ENCODE measurements at regions of chr18 and their contacts with region 1.

Region 1: GRCh38 chr18:21803495-21803894 is 62.9 kb downstream of the MIB1 start:
- DNase-seq: no peak
- ATAC-seq: no peak
- H3K4me3 ChIP-seq: no peak overlapping the region
- H3K27ac ChIP-seq: no peak overlapping the region
- H3K4me1 ChIP-seq: peaks cover 0 to 5% of the 10 kb centered on the region in 2 donors
- H3K27me3 ChIP-seq: no peaks in the 10 kb centered on the region

Region 2: DNA sequence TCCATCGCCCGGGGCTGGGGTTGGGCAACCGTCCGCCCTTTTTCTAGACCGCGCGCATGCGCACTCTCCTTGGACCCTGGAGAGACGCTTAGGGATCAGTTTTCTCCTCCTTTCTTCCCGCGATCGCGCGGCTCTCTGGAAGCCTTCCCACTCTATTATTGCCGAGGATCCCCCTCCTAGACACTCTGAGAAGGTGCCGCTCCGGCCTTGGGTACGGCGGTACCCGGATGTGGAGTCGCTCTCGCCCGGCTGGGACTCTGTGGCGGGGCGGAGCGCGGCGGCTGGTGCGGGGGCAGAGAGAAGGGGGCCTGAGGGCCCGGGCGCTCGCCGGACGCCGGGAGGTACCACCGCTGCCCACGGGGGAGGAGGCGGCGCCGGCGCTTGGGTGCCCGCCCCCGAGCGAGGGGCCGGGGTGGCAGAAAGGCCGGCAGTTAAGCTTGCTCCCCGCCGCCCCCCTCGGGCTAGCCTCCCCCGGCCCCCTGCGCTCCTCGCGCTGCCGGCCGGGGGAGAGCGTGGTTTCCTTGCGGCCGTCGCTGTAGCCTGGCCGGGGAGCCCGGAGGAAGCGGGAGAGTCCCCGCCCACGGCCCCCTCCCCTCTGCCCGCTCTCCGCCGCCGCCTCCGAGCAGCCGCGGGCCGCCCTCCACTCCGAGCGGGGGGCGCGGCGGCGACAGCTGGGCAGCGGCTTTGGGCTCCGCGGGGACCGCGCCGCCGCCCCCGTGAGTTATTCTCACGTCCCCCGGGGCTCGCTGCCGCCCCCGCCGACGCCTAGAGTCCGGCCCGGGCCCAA is 62.6 kb before region 1 on chr18 and contains the start of gene MIB1:
- intact Hi-C with region 1: loop called in 1 of 2 experiments (anchors 5 kb)
- DNase-seq: peak in 1 of 2 donors; percentile 88
- ATAC-seq: peak; percentile 94
- H3K4me3 ChIP-seq: peak within 1 kb of the TSS; percentile 85 to 95
- H3K27ac ChIP-seq: peak within 1 kb of the TSS; percentile 53 to 60
- H3K4me1 ChIP-seq: no peaks in the 10 kb centered on the region
- H3K27me3 ChIP-seq: no peaks in the 10 kb centered on the region
- total RNA-seq, gene MIB1: 57.1 to 63.5 TPM

Region 3: DNA sequence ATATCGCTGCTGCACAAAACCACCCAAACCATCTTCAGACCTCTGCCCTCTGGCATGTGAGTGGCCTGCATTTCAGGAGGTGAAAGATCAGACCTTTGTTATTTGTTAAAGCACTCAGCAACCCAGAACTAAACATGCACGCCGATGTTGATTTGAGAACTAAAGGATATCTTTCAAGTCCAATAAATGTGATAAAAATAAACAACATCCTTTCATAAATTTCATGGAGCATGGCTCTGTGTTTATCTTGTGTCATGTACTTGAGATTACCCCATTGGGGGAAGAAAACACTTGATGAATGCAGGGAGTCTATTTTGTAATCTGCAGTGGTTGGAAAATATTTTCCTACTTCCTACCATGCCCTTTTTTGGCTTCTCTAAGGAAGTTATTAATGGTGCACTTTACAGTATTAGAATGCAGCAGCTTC is 295.1 kb after region 1 on chr18:
- intact Hi-C with region 1: no loop called
- DNase-seq: no peak
- ATAC-seq: no peak
- H3K4me3 ChIP-seq: no peak overlapping the region
- H3K27ac ChIP-seq: no peak overlapping the region
- H3K4me1 ChIP-seq: no peaks in the 10 kb centered on the region
- H3K27me3 ChIP-seq: no peaks in the 10 kb centered on the region

Measured in aorta (tissue), 5 donors.